Astrocyte of the cerebellum (primary cell): ENCODE measurements at regions of chr11 and their contacts with region 1.

Region 1: GRCh38 chr11:114262681-114263512 is 33.3 kb upstream of the NNMT start:
- DNase-seq: peak; percentile 40
- H3K4me3 ChIP-seq: no peak overlapping the region
- CTCF ChIP-seq: peak; percentile 90

Region 2: DNA sequence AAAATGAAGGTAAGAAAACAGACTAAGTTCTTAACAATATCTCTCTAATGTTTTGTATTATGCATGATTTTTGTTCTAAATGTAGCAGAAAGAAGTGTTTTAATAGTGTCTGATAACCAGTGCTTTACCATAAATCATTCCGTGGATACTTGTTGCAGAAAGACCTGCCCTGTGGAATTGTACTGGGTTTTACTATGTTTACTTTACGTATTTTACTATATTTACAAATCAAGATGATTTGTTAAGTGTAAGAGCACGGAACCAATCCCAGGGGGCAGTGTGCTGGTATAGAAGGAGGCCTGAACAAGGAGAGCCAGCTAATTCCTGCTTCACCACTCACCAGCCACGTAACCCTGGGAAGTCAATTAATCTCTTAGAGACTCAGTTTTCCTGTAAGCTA is 356.9 kb before region 1 on chr11:
- in situ Hi-C with region 1: loop called (anchors 5 kb)
- DNase-seq: no peak
- H3K4me3 ChIP-seq: no peak overlapping the region
- CTCF ChIP-seq: peak; percentile 9

Region 3: GRCh38 chr11:114031246-114031945 is 231.5 kb before region 1 on chr11:
- in situ Hi-C with region 1: loop called (anchors 5 kb)
- DNase-seq: no peak
- H3K4me3 ChIP-seq: no peak overlapping the region
- CTCF ChIP-seq: no peak

Region 4: DNA sequence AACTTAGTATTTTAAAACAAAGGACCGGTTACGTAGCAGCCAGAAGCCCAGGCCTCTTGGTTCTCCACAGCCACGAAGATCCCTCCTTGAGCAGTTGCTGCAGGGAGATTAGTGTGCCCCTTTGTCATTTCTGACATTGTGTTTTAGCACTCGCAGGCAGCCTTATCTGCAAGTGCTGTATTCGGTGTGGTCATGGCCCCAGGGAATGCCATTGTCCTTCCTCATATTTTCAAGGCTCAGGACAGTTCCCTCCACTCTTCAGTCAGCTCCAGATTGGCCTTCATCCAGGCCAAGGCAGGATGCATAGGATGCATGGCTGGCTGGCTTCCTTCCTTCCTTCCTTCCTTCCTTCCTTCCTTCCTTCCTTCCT is 114.9 kb before region 1 on chr11:
- in situ Hi-C with region 1: loop called (anchors 10 kb)
- DNase-seq: no peak
- H3K4me3 ChIP-seq: no peak overlapping the region
- CTCF ChIP-seq: no peak

Region 5: DNA sequence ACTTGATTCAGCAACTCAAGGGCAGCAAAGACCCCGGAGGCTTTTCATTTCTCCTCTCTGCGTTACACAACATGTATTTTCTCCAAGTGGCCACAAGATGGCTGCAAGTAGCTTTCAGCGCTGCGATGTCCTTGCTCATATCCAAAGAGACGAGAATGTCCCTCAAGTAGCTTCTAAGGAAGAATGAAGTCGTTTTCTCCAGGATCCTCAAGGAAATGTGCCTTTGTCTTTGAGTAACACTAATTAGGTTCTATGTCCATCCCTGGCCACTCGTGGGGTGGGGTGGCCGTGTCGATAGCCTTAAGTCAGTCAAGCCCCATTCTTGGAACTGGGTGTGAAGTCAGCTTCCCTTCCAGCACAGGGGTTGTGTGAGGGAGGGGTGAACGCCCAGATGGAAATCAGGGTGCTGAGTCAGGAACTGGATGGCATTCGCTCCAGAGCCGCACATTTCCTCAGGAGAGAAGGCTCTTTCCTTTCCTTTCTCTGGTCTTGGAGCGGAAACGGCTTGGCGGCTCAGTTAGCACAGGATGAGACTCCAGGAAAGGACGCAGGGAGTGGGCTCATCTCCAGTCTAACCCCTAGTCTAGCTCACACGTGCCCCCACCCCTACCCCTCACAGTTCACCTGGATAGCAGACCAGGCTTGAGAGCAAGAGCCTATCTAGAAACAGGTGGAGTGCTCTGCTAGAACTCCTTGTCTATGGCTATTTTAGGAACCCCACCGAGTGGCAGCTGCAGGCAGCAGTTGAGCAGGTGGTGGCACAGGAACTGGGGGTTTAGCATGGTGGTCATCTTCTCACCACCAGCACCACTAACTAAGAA is 77.6 kb after region 1 on chr11:
- in situ Hi-C with region 1: no loop called
- DNase-seq: peak; percentile 65
- H3K4me3 ChIP-seq: no peak overlapping the region
- CTCF ChIP-seq: peak; percentile 84